Activated CD4-positive, alpha-beta memory T cell treated with anti-CD3 and anti-CD28 coated beads for 36 hours (primary cell): ENCODE measurements at regions of chr21 and their contacts with region 1.

Region 1: GRCh38 chr21:30044445-30045064 is 104.8 kb upstream of the GRIK1 start:
- DNase-seq: no peak
- H3K4me3 Mint-ChIP-seq: no peak overlapping the region
- H3K27ac Mint-ChIP-seq: no peak overlapping the region
- H3K4me1 Mint-ChIP-seq: no peaks in the 10 kb centered on the region
- H3K27me3 Mint-ChIP-seq: peaks cover 2% of the 10 kb centered on the region

Region 2: DNA sequence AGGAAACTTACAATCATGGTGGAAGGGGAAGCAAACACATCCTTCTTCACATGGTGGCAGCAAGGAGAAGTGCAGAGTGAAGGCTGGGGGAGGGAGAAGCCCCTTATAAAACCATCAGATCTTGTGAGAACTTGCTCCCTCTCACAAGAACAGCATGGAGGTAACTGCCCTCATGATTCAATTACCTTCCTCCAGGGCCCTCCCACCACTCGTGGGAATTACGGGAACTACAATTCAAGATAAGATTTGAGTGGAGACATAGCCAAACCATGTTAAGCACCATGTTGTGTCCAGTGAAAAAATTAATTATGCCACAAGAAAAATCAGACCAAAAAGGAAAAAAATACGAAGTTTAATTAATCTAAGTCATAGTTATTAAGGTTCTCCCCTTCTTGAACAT is 12.6 kb after region 1 on chr21:
- CTCF ChIA-PET with region 1: interaction called, 11 read pairs
- POLR2A ChIA-PET with region 1: no interaction called
- intact Hi-C with region 1: no loop called
- DNase-seq: no peak
- H3K4me3 Mint-ChIP-seq: no peak overlapping the region
- H3K27ac Mint-ChIP-seq: no peak overlapping the region
- H3K4me1 Mint-ChIP-seq: no peaks in the 10 kb centered on the region
- H3K27me3 Mint-ChIP-seq: no peaks in the 10 kb centered on the region

Region 3: GRCh38 chr21:30194701-30195299 is 150.2 kb after region 1 on chr21:
- CTCF ChIA-PET with region 1: interaction called, 4 read pairs
- POLR2A ChIA-PET with region 1: no interaction called
- intact Hi-C with region 1: loop called (anchors 1 kb)
- DNase-seq: no peak
- H3K4me3 Mint-ChIP-seq: no peak overlapping the region
- H3K27ac Mint-ChIP-seq: no peak overlapping the region
- H3K4me1 Mint-ChIP-seq: no peaks in the 10 kb centered on the region
- H3K27me3 Mint-ChIP-seq: no peaks in the 10 kb centered on the region